ENCODE measurements at regions of chr3 and their contacts with region 1.

Region 1: DNA sequence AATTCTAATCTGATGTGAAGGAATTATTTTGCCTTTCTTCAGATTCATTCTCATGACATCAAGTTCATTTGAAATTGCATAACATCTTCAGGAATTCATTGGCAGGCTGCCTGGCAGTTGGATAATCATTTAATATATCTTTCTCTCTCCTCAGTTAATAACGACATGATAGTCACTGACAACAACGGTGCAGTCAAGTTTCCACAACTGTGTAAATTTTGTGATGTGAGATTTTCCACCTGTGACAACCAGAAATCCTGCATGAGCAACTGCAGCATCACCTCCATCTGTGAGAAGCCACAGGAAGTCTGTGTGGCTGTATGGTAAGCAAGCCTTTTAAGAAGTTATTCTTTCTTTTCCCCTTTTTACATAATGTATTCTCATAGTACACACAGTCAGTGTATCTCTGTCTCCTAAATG is 38.2 kb downstream of the TGFBR2 start:
- DNase-seq: peak; percentile 89
- H3K4me3 Mint-ChIP-seq: peak overlapping the region; percentile 61
- H3K27ac Mint-ChIP-seq: peak overlapping the region; percentile 93
- H3K4me1 Mint-ChIP-seq: peaks cover 78% of the 10 kb centered on the region
- H3K27me3 Mint-ChIP-seq: no peaks in the 10 kb centered on the region

Region 2: DNA sequence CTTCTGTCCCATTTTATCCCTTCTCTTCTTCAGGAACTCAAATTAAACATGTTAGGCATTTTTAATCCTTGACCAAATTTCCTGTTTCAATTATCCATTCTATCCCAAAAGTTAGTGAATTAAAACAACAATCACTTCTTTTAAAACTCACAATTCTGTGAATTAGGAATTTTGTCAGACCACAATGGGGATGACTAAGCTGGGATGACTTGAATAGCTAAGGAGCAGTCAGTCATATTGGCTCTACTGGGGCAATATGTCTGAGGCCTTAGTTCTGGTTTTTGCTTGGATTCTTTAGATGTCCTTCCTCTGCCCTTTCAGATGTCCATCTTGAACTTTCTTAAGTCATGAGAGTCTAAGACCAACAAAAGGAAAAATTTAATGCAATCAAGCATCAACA is 216.4 kb before region 1 on chr3:
- intact Hi-C with region 1: no loop called
- DNase-seq: no peak
- H3K4me3 Mint-ChIP-seq: no peak overlapping the region
- H3K27ac Mint-ChIP-seq: no peak overlapping the region
- H3K4me1 Mint-ChIP-seq: no peaks in the 10 kb centered on the region
- H3K27me3 Mint-ChIP-seq: no peaks in the 10 kb centered on the region

Region 3: DNA sequence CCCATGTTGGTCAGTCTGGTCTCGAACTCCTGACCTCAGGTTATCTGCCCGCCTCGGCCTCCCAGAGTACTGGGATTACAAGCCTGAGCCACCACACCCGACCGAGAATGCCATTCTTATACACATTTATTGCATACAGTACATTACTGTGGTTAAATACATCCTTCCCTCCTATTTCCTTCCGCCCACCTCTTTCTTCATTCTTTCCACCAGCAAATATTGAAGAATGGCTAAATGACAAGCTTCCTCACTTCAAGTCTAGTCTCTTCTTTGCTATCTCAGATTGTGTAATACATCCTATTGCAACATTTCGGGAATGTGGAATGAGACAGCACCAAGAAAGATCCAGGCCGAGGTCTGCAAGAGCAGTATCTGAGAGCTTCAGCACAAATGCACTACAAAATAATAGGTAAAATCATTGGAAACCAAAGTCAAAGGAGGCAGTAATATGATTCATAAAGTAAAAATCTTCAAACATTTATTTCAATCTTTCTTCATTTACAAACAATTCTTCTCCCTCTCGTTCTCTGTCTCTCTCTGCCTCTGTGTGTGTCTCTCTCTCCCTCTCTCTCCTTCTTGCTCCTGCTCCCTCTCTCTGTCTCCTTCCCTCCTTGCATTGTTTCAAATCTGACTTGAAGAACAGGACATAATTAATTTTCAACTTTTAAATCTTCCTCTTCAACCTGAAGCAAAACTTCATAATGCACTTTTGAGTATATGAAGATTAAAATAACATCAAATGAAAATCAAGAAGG is 132.9 kb before region 1 on chr3:
- intact Hi-C with region 1: no loop called
- DNase-seq: no peak
- H3K4me3 Mint-ChIP-seq: no peak overlapping the region
- H3K27ac Mint-ChIP-seq: peak overlapping the region; percentile 31
- H3K4me1 Mint-ChIP-seq: peaks cover 10% of the 10 kb centered on the region
- H3K27me3 Mint-ChIP-seq: no peaks in the 10 kb centered on the region

Region 4: DNA sequence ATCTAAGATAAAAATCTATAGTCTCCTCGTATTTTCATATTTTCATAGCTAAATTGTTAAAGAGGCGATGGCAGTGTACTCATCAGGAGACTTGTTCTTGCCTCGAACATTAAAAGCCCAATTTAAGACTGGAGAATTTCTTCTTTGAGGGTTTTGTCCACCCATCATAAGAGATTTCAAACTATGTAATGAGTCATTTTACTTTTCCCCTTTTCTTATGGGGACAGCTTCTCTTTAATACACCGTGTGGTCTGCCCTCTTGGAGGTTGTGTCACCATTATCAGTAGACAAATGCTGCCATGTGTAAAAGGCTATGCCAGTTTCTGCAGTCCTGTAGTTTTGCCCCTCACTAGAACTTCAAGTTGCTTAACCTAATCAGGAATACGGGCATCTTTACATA is 21.3 kb before region 1 on chr3:
- intact Hi-C with region 1: loop called (anchors 1 kb)
- DNase-seq: peak; percentile 58
- H3K4me3 Mint-ChIP-seq: peak overlapping the region; percentile 77
- H3K27ac Mint-ChIP-seq: peak overlapping the region; percentile 94
- H3K4me1 Mint-ChIP-seq: peaks cover 78% of the 10 kb centered on the region
- H3K27me3 Mint-ChIP-seq: no peaks in the 10 kb centered on the region

Region 5: GRCh38 chr3:30628901-30629590 is 15.6 kb before region 1 on chr3:
- intact Hi-C with region 1: loop called (anchors 1 kb)
- DNase-seq: peak; percentile 80
- H3K4me3 Mint-ChIP-seq: peak overlapping the region; percentile 57
- H3K27ac Mint-ChIP-seq: peak overlapping the region; percentile 99
- H3K4me1 Mint-ChIP-seq: peaks cover 76% of the 10 kb centered on the region
- H3K27me3 Mint-ChIP-seq: no peaks in the 10 kb centered on the region

Region 6: DNA sequence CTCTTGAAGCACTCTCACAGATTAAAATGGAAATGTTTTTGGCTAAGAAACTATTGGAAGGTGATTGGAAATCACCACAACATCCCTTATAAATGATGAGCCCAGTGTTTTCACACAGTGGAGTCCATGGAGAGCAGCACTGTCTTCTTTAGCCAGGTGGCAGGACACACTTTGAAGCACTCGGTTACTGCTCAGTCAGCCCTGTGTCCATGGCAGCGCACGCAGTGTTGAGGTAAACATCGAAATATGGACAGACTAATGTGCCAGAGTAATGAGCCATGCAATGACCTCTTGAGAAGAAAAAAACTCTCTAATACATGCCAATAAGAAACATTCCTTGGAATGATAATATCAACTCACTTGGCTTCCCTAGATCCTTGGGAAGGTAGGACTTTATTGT is 28.4 kb after region 1 on chr3:
- intact Hi-C with region 1: loop called (anchors 5 kb)
- DNase-seq: no peak
- H3K4me3 Mint-ChIP-seq: peak overlapping the region; percentile 64
- H3K27ac Mint-ChIP-seq: peak overlapping the region; percentile 58
- H3K4me1 Mint-ChIP-seq: peaks cover 83% of the 10 kb centered on the region
- H3K27me3 Mint-ChIP-seq: no peaks in the 10 kb centered on the region

Region 7: DNA sequence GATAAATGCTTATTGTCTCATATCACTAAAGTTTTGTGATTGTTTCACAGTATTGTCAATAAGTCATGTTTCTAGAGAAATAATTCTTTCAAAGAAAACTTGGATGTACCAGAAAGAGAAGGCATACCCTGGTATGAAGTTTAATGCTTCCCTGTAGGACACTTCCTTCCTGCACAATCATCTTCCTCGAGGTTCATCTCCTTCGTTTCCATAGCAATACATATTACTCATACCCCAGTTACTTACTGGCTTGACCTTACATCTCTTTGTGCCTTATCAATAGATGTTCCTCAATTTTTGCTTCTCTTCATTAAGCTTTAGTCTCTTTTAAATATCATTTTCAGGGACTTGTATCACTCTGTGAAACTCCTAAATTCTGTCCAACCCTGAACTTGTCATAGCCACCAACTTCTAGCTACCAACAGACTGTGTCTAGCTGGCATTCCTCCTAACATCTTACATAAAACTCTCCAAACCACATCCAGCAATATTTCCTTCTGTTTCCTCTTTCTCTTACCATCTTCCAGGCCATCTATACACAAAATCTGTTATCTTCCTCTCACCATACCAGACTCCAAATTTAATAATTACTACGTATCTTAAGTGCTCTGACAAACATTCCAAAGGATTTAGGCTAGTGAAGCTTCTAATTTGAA is 115.6 kb after region 1 on chr3:
- intact Hi-C with region 1: no loop called
- DNase-seq: no peak
- H3K4me3 Mint-ChIP-seq: no peak overlapping the region
- H3K27ac Mint-ChIP-seq: no peak overlapping the region
- H3K4me1 Mint-ChIP-seq: peaks cover 2% of the 10 kb centered on the region
- H3K27me3 Mint-ChIP-seq: peaks cover 18% of the 10 kb centered on the region